GM12878 (cell line): ENCODE measurements at regions of chr3 and their contacts with region 1.

Region 1: GRCh38 chr3:165814380-165814779 is 22.8 kb downstream of the BCHE start:
- DNase-seq: no peak
- ATAC-seq: no peak
- H3K4me3 ChIP-seq: no peak overlapping the region
- H3K27ac ChIP-seq: no peak overlapping the region
- H3K4me1 ChIP-seq: no peaks in the 10 kb centered on the region
- H3K27me3 ChIP-seq: no peaks in the 10 kb centered on the region
- CTCF ChIP-seq: no peak
- EP300 ChIP-seq: no peak
- POLR2A ChIP-seq: no peak
- RAD21 ChIP-seq: no peak

Region 2: DNA sequence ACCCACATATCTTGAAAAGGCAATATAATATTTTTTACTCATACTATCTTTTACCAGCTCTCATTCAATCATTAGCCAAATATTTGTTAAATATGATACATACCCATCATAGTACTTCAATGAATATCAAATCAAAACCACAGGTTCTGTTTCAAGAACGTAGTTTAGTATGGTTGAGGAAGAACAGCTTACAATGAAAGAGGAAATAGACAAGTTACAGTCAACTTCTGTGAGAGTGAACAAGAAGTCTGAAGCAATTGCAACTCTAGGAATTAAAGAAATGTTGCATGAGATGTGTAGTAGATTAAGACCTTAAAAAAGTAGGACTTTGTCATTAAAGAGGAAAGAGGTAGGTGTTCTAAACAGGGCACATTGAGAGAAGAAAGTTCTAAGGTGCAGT is 13.5 kb after region 1 on chr3:
- CTCF ChIA-PET with region 1: interaction called, 3 read pairs
- POLR2A ChIA-PET with region 1: interaction called, 10 read pairs
- RAD21 ChIA-PET with region 1: interaction called, 98 read pairs
- SMC1A ChIA-PET with region 1: interaction called, 40 read pairs
- in situ Hi-C with region 1: no loop called
- intact Hi-C with region 1: no loop called
- DNase-seq: no peak
- ATAC-seq: peak; percentile 45
- H3K4me3 ChIP-seq: no peak overlapping the region
- H3K27ac ChIP-seq: no peak overlapping the region
- H3K4me1 ChIP-seq: no peaks in the 10 kb centered on the region
- H3K27me3 ChIP-seq: no peaks in the 10 kb centered on the region
- CTCF ChIP-seq: no peak
- EP300 ChIP-seq: no peak; a peak in 1 of 4 replicates
- POLR2A ChIP-seq: no peak
- RAD21 ChIP-seq: no peak